Posterior cingulate gyrus (tissue), 11 donors: ENCODE measurements at regions of chr14 and their contacts with region 1.

Region 1: GRCh38 chr14:68816262-68816942 is 23.5 kb upstream of the ZFP36L1 start:
- DNase-seq: peak; percentile 78 to 98 (median 88)

Region 2: GRCh38 chr14:67837011-67837624 is 979.3 kb before region 1 on chr14:
- intact Hi-C with region 1: loop called (anchors 10 kb)
- DNase-seq: no peak

Region 3: DNA sequence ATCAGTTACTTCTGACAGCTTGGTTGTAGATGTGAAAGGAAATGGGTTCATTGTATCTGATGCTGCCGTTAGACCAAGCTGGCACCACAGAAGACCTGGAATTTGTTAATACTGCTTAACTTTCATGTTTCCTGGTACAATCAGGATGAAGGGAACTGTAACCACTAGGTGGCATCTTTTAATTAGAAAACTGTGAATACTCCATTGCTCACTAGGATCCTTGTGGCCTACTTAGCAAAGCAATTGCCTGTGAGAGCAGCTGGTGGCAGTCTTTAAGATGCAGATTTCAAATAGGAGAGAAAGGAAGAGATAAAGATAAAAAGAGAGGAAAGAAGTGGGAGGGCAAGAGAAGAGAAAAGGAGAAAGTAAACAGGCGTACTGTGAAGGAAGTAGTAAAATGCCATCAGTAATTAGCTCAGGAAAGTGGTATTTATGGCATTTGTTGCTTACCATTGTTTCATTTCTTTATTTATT is 882.4 kb before region 1 on chr14:
- intact Hi-C with region 1: loop called (anchors 2 kb)
- DNase-seq: peak in 1 of 10 donors; percentile 55

Region 4: GRCh38 chr14:67943947-67944346 is 872.5 kb before region 1 on chr14:
- intact Hi-C with region 1: loop called (anchors 1 kb)
- DNase-seq: peak in 5 of 10 donors; percentile 5 to 36 (median 22)

Region 5: DNA sequence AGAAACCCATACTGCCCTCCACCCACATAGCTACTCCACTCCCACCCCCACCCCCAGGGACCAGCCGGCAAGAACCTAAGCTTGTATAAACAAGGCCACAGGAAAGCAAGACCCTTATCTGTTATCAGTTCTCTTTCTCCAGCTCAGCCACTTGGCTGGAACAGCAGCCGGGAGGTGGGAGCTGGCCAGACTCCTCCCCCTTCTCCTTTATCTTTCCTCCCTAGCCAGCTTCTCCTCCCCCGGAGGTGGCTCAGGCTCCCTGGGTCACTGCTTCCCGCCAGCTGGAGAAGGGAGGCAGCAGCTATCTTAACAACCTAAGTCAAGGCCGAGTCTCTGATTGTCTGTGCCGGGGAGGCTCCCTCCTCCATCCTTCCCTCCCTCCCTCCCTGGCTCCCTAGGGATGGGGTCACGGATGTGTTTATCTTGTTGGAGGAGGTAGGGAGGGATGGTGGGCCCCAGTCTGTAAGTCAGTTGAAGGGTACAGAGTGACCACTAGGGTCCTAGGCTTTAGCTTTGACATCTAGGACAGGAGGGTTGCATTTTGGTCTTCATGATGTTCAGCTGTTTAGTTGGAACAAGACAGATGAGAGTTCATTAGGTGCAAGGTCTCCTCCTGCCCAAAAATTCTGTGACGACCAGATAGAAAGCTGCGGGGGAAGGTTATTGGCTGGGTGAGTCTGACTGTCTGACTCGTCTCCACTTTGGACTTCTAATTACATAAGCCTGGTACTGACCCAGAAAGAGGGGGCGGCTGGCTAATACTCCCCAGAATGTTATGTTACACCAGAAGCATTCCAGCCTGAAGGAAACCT is 53.2 kb before region 1 on chr14:
- intact Hi-C with region 1: no loop called
- DNase-seq: peak in 1 of 10 donors; percentile 38

Region 6: DNA sequence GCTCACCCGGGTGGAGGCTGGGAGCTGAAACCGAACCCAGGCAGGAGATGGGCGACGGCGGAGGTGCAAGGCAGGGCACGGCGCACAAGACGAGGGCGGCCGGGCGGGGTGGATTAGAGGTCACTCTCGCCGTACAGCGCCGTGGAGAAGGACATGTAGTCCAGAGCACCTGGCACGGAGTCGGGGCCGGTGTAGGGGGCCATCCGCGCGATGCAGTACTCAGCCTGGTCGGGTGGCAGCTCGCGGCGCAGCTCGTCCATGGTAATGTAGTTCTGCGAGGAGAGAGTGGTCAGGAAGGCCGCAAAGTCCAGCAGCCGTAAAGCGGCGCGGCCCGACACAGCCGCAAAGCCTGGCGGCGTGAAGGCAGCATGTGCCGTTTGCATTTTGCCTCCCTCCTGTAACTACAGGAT is 58.3 kb after region 1 on chr14:
- intact Hi-C with region 1: no loop called
- DNase-seq: peak in 1 of 10 donors; percentile 82